Mammary epithelial cell (primary cell): ENCODE measurements at regions of chr2 and their contacts with region 1.

Region 1: DNA sequence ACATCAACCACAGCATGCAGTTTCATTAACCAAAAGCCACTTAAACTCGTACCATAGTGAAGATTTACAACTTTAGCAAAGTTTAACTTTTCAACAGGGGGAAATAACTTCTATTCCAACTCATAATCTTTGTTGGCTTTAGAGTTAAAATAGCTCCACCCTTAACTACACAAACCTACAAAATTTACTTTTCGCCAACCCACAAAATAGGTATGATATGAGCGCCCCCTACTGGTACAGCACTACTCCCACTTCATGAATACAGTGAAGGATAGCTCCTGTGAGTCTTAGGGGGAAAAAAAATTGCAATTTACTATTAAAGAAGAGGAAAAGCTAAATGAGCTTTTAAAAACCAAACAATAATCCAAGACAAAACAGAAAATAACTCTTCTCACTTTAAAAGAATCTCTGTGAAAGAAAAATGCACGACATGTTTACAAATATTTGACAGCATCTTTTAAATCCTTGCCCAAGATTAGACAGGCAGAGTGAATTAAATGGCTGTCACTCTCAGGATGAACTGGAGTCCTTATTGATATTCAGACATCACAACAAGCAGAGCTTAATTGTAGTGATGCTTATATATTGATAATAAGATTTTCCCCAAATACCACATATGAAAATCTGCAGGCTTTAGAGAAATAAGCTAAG is 32.2 kb downstream of the TMEFF2 start:
- DNase-seq: peak; percentile 42
- H3K4me3 ChIP-seq: no peak overlapping the region
- H3K27ac ChIP-seq: no peak overlapping the region
- H3K4me1 ChIP-seq: no peaks in the 10 kb centered on the region
- H3K27me3 ChIP-seq: peaks cover 4% of the 10 kb centered on the region
- CTCF ChIP-seq: peak; percentile 85 to 88

Region 2: GRCh38 chr2:191465766-191466420 is 696.6 kb before region 1 on chr2:
- CTCF ChIA-PET with region 1: no interaction called
- dilution Hi-C with region 1: no loop called
- in situ Hi-C with region 1: no loop called
- intact Hi-C with region 1: no loop called
- DNase-seq: no peak
- H3K4me3 ChIP-seq: no peak overlapping the region
- H3K27ac ChIP-seq: no peak overlapping the region
- H3K4me1 ChIP-seq: no peaks in the 10 kb centered on the region
- H3K27me3 ChIP-seq: no peaks in the 10 kb centered on the region
- CTCF ChIP-seq: no peak

Region 3: GRCh38 chr2:191566344-191566743 is 596.2 kb before region 1 on chr2:
- CTCF ChIA-PET with region 1: no interaction called
- dilution Hi-C with region 1: no loop called
- in situ Hi-C with region 1: no loop called
- intact Hi-C with region 1: loop called (anchors 1 kb)
- DNase-seq: peak; percentile 38
- H3K4me3 ChIP-seq: no peak overlapping the region
- H3K27ac ChIP-seq: no peak overlapping the region
- H3K4me1 ChIP-seq: no peaks in the 10 kb centered on the region
- H3K27me3 ChIP-seq: no peaks in the 10 kb centered on the region
- CTCF ChIP-seq: peak; percentile 80 to 90

Region 4: GRCh38 chr2:191758518-191759507 is 403.7 kb before region 1 on chr2:
- CTCF ChIA-PET with region 1: interaction called, 11 read pairs
- dilution Hi-C with region 1: no loop called
- in situ Hi-C with region 1: no loop called
- intact Hi-C with region 1: no loop called
- DNase-seq: peak; percentile 80
- H3K4me3 ChIP-seq: no peak overlapping the region
- H3K27ac ChIP-seq: peak overlapping the region; percentile 34
- H3K4me1 ChIP-seq: peaks cover 12% of the 10 kb centered on the region
- H3K27me3 ChIP-seq: no peaks in the 10 kb centered on the region
- CTCF ChIP-seq: peak; percentile 81 to 85

Region 5: DNA sequence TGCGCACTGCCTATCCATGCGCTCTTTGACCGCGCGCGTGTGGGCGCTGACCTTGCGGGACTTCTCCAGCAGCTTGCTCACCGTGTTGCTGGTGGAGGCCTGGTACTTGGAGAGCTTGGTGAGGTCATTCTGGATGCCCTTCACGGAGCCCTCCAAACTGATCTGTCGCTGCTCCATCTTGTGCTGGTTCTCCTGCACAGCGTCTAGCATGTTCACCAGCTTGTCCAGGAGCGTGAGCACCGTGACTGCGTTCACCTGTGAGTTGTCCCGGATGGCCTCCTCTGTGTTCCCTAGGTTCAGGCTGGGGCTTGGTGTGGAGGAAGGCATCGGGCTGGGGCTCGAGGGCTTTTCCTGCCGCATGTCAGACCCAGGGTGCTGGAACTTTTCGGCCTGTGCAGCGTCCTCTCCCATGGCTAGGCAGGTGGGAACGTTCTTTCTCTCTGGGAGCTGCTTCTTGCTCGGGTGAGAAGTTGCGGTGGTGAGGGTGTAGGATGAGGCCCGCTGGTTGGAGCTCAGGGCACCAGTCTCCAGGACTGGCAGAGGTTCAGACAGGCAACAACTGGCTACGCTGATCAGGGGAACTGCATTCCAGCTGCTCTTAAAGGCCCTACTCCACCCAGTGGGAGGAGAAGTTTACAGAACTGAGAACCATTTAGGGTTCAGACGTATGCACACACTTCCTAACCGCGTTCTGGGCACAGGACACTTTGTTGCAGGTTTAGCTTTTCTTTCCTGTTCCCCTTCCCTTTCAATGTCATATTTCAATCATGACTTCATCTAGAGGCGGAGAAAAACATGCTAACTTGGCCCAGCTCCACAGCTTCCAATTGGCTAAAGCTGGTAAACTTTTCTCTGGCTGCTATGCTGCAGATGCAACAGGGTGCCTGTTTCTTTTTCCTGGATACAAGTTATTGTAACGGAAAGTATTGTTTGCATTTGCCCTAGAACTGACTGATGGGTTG is 315.7 kb before region 1 on chr2 and contains the start of gene CAVIN2:
- CTCF ChIA-PET with region 1: no interaction called
- dilution Hi-C with region 1: no loop called
- in situ Hi-C with region 1: no loop called
- intact Hi-C with region 1: loop called (anchors 1 kb)
- DNase-seq: peak; percentile 84
- H3K4me3 ChIP-seq: peak within 1 kb of the TSS; percentile 60 to 71 (median 65)
- H3K27ac ChIP-seq: peak within 1 kb of the TSS; percentile 53
- H3K4me1 ChIP-seq: peaks cover 31% of the 10 kb centered on the region
- H3K27me3 ChIP-seq: no peaks in the 10 kb centered on the region
- CTCF ChIP-seq: peak in 1 of 2 donors; percentile 13
- total RNA-seq, gene CAVIN2: 9.4 to 10.2 TPM

Region 6: GRCh38 chr2:192128655-192129054 is 33.9 kb before region 1 on chr2:
- CTCF ChIA-PET with region 1: no interaction called
- dilution Hi-C with region 1: no loop called
- in situ Hi-C with region 1: no loop called
- intact Hi-C with region 1: no loop called
- DNase-seq: no peak
- H3K4me3 ChIP-seq: no peak overlapping the region
- H3K27ac ChIP-seq: no peak overlapping the region
- H3K4me1 ChIP-seq: peaks cover 5% of the 10 kb centered on the region
- H3K27me3 ChIP-seq: no peaks in the 10 kb centered on the region
- CTCF ChIP-seq: no peak

Region 7: DNA sequence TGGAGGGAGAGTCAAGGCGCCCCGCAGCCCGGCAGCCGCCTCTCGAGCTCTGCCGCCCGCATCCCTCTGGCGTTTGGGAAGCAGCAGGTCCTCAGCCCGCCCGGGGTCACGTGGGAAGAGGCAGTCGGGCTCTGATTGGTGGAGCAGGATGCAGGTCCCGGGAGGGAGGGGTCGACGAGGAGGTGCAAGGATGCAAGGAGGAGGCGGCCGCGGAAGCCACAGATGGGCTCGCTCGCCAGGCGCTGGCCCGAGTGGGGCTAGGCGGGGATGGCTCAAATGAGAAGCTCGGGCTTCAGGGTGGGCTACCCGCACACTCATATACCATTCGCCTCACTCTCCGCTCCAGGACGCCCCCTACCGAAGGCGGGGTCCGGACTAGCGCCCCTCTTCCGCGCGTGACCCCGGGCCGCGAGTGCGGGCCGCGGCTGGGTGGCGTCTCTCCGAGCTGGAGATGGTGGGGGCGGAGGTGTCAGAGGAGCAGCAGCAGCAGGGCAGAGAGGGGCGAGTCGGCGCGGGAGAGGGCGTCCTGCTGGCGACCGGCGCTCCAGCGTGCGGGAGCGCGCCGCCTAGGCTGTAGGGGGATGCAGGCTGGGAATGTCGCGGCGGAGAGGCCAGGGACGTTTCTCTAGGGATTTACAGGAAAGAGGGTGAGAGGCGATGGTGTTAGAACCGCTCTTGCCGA is 32.5 kb after region 1 on chr2 and contains the start of gene TMEFF2:
- CTCF ChIA-PET with region 1: no interaction called
- dilution Hi-C with region 1: no loop called
- in situ Hi-C with region 1: no loop called
- intact Hi-C with region 1: no loop called
- DNase-seq: peak; percentile 6
- H3K4me3 ChIP-seq: peak within 1 kb of the TSS; percentile 22 to 39 (median 24)
- H3K27ac ChIP-seq: no peak within 1 kb of the TSS
- H3K4me1 ChIP-seq: peaks cover 16% of the 10 kb centered on the region
- H3K27me3 ChIP-seq: peaks cover 44% of the 10 kb centered on the region
- CTCF ChIP-seq: no peak
- total RNA-seq, gene TMEFF2: not detected